Ascending aorta (tissue), 2 donors: ENCODE measurements at regions of chr15 and their contacts with region 1.

Region 1: GRCh38 chr15:41557673-41558399 is 1.2 kb upstream of the TYRO3 start:
- DNase-seq: peak in 1 of 2 donors; percentile 73
- H3K4me3 ChIP-seq: peak overlapping the region; percentile 95 to 97
- H3K27ac ChIP-seq: peak overlapping the region; percentile 31 to 67
- H3K4me1 ChIP-seq: peaks cover 5 to 9% of the 10 kb centered on the region in 2 donors
- H3K27me3 ChIP-seq: no peaks in the 10 kb centered on the region
- CTCF ChIP-seq: peak; percentile 43 to 71 (median 65)

Region 2: GRCh38 chr15:41401904-41402267 is 155.9 kb before region 1 on chr15:
- intact Hi-C with region 1: no loop called
- DNase-seq: no peak
- H3K4me3 ChIP-seq: peak overlapping the region; percentile 82 to 91
- H3K27ac ChIP-seq: peak overlapping the region; percentile 82 to 83
- H3K4me1 ChIP-seq: peaks cover 0 to 4% of the 10 kb centered on the region in 2 donors
- H3K27me3 ChIP-seq: no peaks in the 10 kb centered on the region
- CTCF ChIP-seq: no peak

Region 3: DNA sequence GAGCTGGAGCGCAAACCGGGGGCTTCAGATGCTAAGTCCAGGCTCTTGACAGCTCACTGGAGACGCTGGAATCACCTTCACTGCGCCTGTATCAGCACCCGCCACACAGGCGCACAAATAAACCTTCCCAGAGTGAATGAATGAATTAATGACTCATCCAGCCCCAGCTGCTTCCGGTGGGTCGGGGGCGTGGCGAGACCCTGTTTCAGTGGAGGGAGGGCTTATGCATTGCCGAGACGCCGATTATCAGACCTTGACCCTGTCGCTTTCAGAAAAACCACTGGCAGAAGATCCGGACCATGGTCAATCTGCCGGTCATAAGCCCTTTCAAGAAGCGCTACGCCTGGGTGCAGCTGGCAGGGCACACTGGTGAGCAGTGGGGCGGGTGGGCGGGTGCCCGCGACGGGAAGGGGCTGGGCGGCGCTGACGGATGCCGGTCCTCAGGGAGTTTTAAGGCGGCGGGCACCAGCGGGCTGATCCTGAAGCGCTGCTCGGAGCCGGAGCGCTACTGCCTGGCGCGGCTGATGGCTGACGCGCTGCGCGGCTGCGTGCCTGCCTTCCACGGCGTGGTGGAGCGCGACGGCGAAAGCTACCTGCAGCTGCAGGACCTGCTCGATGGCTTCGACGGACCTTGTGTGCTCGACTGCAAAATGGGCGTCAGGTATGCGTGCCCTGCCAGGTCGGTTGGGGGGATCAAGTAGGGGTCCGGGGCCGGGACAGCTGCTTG is 56.5 kb before region 1 on chr15:
- intact Hi-C with region 1: no loop called
- DNase-seq: no peak
- H3K4me3 ChIP-seq: peak overlapping the region; percentile 47 to 50
- H3K27ac ChIP-seq: no peak overlapping the region
- H3K4me1 ChIP-seq: peaks cover 2 to 15% of the 10 kb centered on the region in 2 donors
- H3K27me3 ChIP-seq: peaks cover 8% of the 10 kb centered on the region
- CTCF ChIP-seq: no peak

Region 4: GRCh38 chr15:41530363-41530956 is 27.4 kb before region 1 on chr15:
- intact Hi-C with region 1: no loop called
- DNase-seq: no peak
- H3K4me3 ChIP-seq: no peak overlapping the region
- H3K27ac ChIP-seq: no peak overlapping the region
- H3K4me1 ChIP-seq: no peaks in the 10 kb centered on the region
- H3K27me3 ChIP-seq: no peaks in the 10 kb centered on the region
- CTCF ChIP-seq: no peak

Region 5: GRCh38 chr15:41544650-41545015 is 13.2 kb before region 1 on chr15:
- intact Hi-C with region 1: loop called (anchors 1 kb)
- DNase-seq: peak in 1 of 2 donors; percentile 67
- H3K4me3 ChIP-seq: peak overlapping the region; percentile 81
- H3K27ac ChIP-seq: no peak overlapping the region
- H3K4me1 ChIP-seq: peaks cover 0 to 5% of the 10 kb centered on the region in 2 donors
- H3K27me3 ChIP-seq: no peaks in the 10 kb centered on the region
- CTCF ChIP-seq: no peak

Region 6: GRCh38 chr15:41585127-41586047 is 27.6 kb after region 1 on chr15:
- intact Hi-C with region 1: loop called (anchors 1 kb)
- DNase-seq: peak in 1 of 2 donors; percentile 74
- H3K4me3 ChIP-seq: peak overlapping the region; percentile 61 to 82
- H3K27ac ChIP-seq: peak overlapping the region; percentile 40 to 46
- H3K4me1 ChIP-seq: peaks cover 0 to 5% of the 10 kb centered on the region in 2 donors
- H3K27me3 ChIP-seq: no peaks in the 10 kb centered on the region
- CTCF ChIP-seq: peak in 2 of 3 experiments; percentile 13 to 22

Region 7: GRCh38 chr15:41621200-41622193 is 63.7 kb after region 1 on chr15:
- intact Hi-C with region 1: loop called (anchors 2 kb)
- DNase-seq: peak; percentile 17 to 86
- H3K4me3 ChIP-seq: peak overlapping the region; percentile 61 to 77
- H3K27ac ChIP-seq: peak overlapping the region; percentile 83
- H3K4me1 ChIP-seq: peaks cover 0 to 8% of the 10 kb centered on the region in 2 donors
- H3K27me3 ChIP-seq: no peaks in the 10 kb centered on the region
- CTCF ChIP-seq: no peak